ENCODE measurements at regions of chr1 and their contacts with region 1.

Region 1: DNA sequence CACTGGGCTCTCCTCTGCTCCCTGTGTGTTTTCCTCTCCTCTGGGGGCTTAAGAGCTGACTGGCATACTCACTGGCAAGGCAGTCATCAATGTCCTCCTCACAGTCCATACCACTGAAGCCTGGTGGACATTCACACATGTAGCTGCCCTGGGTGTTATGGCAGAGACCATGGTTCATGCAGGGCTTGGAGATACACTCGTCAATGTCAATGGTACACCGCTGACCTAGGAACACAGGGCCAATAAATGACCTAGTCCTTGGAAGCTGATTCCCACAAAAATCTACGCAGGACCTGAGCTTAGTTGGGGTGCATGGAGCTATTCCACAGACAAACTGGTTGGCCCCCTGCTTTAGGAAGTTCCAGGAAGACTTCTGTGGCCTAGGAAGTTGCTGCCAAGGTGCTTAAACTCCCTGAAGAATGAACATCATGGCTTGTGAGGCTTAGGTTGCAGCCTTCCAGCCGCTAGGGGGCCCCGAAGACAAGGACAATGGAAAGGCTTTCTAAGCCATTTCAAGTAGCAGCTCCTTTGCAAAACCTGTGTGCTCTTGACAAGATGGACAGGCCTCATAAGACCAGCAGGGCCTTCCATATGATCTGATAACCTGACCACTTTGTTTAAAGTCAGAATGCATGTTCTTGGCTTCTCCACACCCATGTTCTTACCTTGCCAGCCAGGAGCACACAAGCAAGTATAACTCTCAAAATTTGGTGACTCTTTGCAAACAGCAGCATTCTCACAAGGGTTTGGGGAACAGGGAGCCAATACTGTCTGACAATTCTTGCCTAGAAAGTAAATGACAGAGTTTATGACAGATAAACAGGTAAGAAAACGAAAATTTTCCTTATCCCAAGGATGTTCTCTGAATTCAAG is 52.3 kb upstream of the ADAM30 start:
- DNase-seq: peak; percentile 57
- ATAC-seq: peak; percentile 71
- H3K4me3 Mint-ChIP-seq: no peak overlapping the region
- H3K27ac Mint-ChIP-seq: no peak overlapping the region
- H3K4me1 Mint-ChIP-seq: peaks cover 3% of the 10 kb centered on the region
- H3K27me3 Mint-ChIP-seq: no peaks in the 10 kb centered on the region
- CTCF ChIP-seq: peak; percentile 48

Region 2: GRCh38 chr1:118217141-118217838 is 1731.3 kb before region 1 on chr1:
- CTCF ChIA-PET with region 1: no interaction called
- POLR2A ChIA-PET with region 1: no interaction called
- intact Hi-C with region 1: no loop called
- DNase-seq: no peak
- ATAC-seq: no peak
- H3K4me3 Mint-ChIP-seq: no peak overlapping the region
- H3K27ac Mint-ChIP-seq: no peak overlapping the region
- H3K4me1 Mint-ChIP-seq: no peaks in the 10 kb centered on the region
- H3K27me3 Mint-ChIP-seq: no peaks in the 10 kb centered on the region
- CTCF ChIP-seq: no peak

Region 3: DNA sequence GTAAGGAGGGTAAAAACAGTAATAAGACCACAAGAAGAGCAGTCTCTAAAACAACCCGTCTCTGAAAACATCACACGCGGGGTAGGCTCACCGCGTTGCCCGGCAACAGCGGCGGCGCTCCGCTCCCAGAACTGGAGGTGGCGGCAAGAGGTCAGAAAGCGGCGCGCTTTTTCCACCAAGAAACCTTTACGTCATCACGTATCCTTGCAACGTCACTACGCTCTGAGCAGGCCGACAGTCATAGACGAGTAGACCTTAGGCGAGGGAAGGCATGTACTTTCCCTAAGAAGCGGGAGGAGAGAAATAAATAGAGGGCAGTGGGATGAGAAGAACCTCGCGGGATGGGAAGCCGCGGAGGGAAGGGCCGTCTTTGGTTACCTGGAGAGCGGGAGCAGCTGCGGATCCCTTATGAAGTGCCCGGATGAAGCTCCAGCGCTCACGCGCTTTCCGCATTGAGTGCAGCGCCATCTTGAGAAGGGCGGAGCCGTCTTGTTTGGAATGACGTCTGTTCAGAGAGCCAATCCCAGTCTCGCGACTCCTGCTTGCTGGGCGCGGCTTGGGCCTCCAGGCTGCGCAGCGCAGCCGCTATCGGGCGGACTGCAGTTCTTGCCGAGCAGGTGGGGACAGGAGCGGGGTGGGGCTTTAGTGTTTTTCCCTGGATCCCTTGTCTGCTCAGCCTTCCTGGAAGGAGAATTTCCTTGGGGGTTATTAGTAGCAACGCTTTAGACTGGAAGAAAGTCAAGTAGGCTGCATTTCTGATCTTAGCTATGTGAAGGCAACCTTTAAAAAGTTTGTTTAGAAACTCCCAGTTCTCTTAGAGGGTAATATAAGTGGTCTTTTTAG is 808.2 kb before region 1 on chr1 and contains the start of gene WARS2:
- CTCF ChIA-PET with region 1: no interaction called
- POLR2A ChIA-PET with region 1: no interaction called
- intact Hi-C with region 1: no loop called
- DNase-seq: peak; percentile 83
- ATAC-seq: peak; percentile 93
- H3K4me3 Mint-ChIP-seq: no peak within 1 kb of the TSS
- H3K27ac Mint-ChIP-seq: no peak within 1 kb of the TSS
- H3K4me1 Mint-ChIP-seq: peaks cover 4% of the 10 kb centered on the region
- H3K27me3 Mint-ChIP-seq: no peaks in the 10 kb centered on the region
- CTCF ChIP-seq: no peak
- total RNA-seq, gene WARS2: 15.1 and 15.2 TPM in 2 replicates

Region 4: GRCh38 chr1:119440721-119441307 is 507.8 kb before region 1 on chr1:
- CTCF ChIA-PET with region 1: no interaction called
- POLR2A ChIA-PET with region 1: no interaction called
- intact Hi-C with region 1: no loop called
- DNase-seq: no peak
- ATAC-seq: no peak
- H3K4me3 Mint-ChIP-seq: no peak overlapping the region
- H3K27ac Mint-ChIP-seq: no peak overlapping the region
- H3K4me1 Mint-ChIP-seq: no peaks in the 10 kb centered on the region
- H3K27me3 Mint-ChIP-seq: no peaks in the 10 kb centered on the region
- CTCF ChIP-seq: no peak

Region 5: DNA sequence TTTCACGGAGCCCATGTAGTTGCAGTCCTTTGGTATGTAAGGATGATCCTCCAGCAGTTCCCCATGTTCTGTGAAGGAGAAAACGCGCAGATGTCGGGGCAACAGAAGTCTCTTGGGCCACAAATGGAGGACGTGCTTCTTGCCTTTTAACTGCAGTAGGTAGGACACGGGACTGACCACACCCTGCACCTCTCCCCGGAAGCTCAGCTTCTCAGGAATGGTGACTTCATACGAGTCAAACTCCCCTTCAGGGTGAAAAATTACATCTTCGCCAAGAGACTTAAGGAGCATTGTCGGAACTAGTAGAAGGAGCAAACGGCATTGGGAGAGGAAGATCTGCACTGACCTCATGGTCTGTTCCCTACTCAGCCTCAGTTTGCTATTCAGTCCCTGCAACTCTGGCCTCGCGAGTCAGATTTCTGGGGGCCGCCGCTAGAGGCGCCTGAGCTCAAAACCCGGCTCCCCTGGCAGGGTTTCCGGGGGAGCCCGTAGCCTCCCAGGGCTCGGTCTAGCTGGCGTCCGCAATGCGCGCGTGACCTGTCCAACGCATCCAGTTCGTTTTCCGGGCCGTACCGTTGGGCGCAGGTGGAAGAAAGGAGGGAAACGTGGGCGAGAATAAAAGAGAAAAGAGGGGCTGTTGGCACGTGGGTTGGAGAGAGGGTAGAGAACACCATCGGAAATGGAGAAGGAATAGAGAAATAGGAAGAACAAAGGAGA is 52.4 kb before region 1 on chr1 and contains the start of gene ADAM30:
- CTCF ChIA-PET with region 1: no interaction called
- POLR2A ChIA-PET with region 1: no interaction called
- intact Hi-C with region 1: no loop called
- DNase-seq: no peak
- ATAC-seq: no peak
- H3K4me3 Mint-ChIP-seq: no peak within 1 kb of the TSS
- H3K27ac Mint-ChIP-seq: no peak within 1 kb of the TSS
- H3K4me1 Mint-ChIP-seq: no peaks in the 10 kb centered on the region
- H3K27me3 Mint-ChIP-seq: peaks cover 5% of the 10 kb centered on the region
- CTCF ChIP-seq: no peak
- total RNA-seq, gene ADAM30: not detected in 2 replicates

Region 6: GRCh38 chr1:119968068-119968492 is 19.5 kb after region 1 on chr1:
- CTCF ChIA-PET with region 1: interaction called, 5 read pairs
- POLR2A ChIA-PET with region 1: no interaction called
- intact Hi-C with region 1: loop called (anchors 2 kb)
- DNase-seq: peak; percentile 53
- ATAC-seq: peak; percentile 99
- H3K4me3 Mint-ChIP-seq: no peak overlapping the region
- H3K27ac Mint-ChIP-seq: peak overlapping the region; percentile 36
- H3K4me1 Mint-ChIP-seq: peaks cover 8% of the 10 kb centered on the region
- H3K27me3 Mint-ChIP-seq: no peaks in the 10 kb centered on the region
- CTCF ChIP-seq: no peak

Measured in activated B cell treated with CpG ODN at 0.5 μM for 24 hours (primary cell).